Caco-2 (cell line): ENCODE measurements at regions of chr9 and their contacts with region 1.

Region 1: GRCh38 chr9:122954253-122954691 is 13.5 kb downstream of the RABGAP1 start:
- DNase-seq: no peak
- H3K4me3 ChIP-seq: no peak overlapping the region
- H3K4me3 Mint-ChIP-seq: no peak overlapping the region
- H3K27ac Mint-ChIP-seq: no peak overlapping the region
- H3K4me1 ChIP-seq: no peaks in the 10 kb centered on the region
- H3K4me1 Mint-ChIP-seq: peaks cover 26% of the 10 kb centered on the region
- H3K27me3 ChIP-seq: no peaks in the 10 kb centered on the region
- H3K27me3 Mint-ChIP-seq: no peaks in the 10 kb centered on the region
- CTCF ChIP-seq: no peak

Region 2: DNA sequence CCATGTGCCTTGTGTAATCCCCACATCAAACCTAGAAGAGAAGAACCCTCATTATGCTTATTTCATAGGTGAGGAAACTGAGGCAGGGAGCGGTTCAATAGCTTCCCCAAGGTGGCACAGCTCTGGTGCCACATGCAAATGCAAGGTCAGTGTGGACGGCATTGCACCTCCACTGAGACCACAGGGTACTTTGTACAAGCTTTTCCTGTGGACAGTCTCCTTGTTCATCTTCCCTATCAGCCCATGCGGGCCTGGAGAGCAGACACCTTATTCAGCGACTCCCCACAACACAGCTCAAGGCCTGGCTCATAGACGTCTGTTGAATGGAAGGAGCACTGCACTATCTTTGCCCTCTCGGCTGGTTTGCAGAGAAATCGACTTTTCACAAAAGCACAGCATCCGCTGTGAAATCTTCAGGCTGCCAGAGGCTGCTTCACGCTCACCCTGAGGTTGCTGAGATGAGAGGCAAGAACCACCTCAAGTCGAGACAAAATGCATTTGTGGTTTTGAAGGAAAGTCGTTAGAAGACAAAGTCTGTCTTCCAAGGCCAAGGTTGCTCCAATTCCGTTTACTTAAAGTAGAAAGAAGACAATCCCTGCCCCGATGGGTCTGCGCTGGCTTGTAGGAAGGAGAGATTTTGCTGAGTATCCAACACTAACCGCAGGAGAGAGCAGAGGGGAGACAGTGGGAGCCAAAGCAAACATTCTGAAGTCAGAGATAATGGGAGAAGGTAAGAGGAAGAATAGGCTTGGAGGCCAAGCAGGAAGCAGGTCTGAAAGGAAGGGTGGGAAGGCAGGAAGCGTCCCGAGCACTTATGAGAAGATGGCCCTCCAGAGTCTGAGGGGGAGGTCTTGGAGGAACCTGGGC is 348.3 kb after region 1 on chr9:
- CTCF ChIA-PET with region 1: interaction called, 10 read pairs
- POLR2A ChIA-PET with region 1: no interaction called
- intact Hi-C with region 1: no loop called
- DNase-seq: no peak
- H3K4me3 ChIP-seq: no peak overlapping the region
- H3K4me3 Mint-ChIP-seq: no peak overlapping the region
- H3K27ac Mint-ChIP-seq: no peak overlapping the region
- H3K4me1 ChIP-seq: peaks cover 6% of the 10 kb centered on the region; the same call in 1 of the 2 replicates
- H3K4me1 Mint-ChIP-seq: peaks cover 10% of the 10 kb centered on the region
- H3K27me3 ChIP-seq: no peaks in the 10 kb centered on the region
- H3K27me3 Mint-ChIP-seq: no peaks in the 10 kb centered on the region
- CTCF ChIP-seq: no peak